Naive thymus-derived CD4-positive, alpha-beta T cell (primary cell): ENCODE measurements at regions of chr2 and their contacts with region 1.

Region 1: GRCh38 chr2:42360890-42361727 is at the start of gene COX7A2L:
- DNase-seq: peak; percentile 88 to 97 (median 96)
- ATAC-seq: peak; percentile 98
- H3K4me3 ChIP-seq: peak within 1 kb of the TSS; percentile 82
- H3K4me3 Mint-ChIP-seq: peak within 1 kb of the TSS; percentile 87 to 98 (median 95)
- H3K27ac ChIP-seq: peak within 1 kb of the TSS; percentile 92
- H3K27ac Mint-ChIP-seq: peak within 1 kb of the TSS; percentile 90 to 100 (median 98)
- H3K4me1 ChIP-seq: peaks cover 23 to 24% of the 10 kb centered on the region in 2 donors
- H3K4me1 Mint-ChIP-seq: peaks cover 33 to 56% (median 51%) of the 10 kb centered on the region in 7 donors
- H3K27me3 ChIP-seq: no peaks in the 10 kb centered on the region
- H3K27me3 Mint-ChIP-seq: no peaks in the 10 kb centered on the region
- total RNA-seq, gene COX7A2L: 57.3 to 87.7 (median 81.5) TPM

Region 2: GRCh38 chr2:42095923-42096408 is 265.1 kb before region 1 on chr2:
- CTCF ChIA-PET with region 1: interaction called, 3 read pairs
- POLR2A ChIA-PET with region 1: interaction called, 3 read pairs
- intact Hi-C with region 1: loop called in 1 of 2 experiments (anchors 1 kb)
- DNase-seq: peak; percentile 46 to 78 (median 71)
- ATAC-seq: peak; percentile 71
- H3K4me3 ChIP-seq: no peak overlapping the region
- H3K4me3 Mint-ChIP-seq: no peak overlapping the region
- H3K27ac ChIP-seq: no peak overlapping the region
- H3K27ac Mint-ChIP-seq: peak overlapping the region in 7 of 9 donors; percentile 4 to 70 (median 25)
- H3K4me1 ChIP-seq: peaks cover 33 to 38% of the 10 kb centered on the region in 2 donors
- H3K4me1 Mint-ChIP-seq: peaks cover 37 to 50% (median 47%) of the 10 kb centered on the region in 7 donors
- H3K27me3 ChIP-seq: no peaks in the 10 kb centered on the region
- H3K27me3 Mint-ChIP-seq: peaks cover 0 to 35% (median 0%) of the 10 kb centered on the region in 5 donors

Region 3: DNA sequence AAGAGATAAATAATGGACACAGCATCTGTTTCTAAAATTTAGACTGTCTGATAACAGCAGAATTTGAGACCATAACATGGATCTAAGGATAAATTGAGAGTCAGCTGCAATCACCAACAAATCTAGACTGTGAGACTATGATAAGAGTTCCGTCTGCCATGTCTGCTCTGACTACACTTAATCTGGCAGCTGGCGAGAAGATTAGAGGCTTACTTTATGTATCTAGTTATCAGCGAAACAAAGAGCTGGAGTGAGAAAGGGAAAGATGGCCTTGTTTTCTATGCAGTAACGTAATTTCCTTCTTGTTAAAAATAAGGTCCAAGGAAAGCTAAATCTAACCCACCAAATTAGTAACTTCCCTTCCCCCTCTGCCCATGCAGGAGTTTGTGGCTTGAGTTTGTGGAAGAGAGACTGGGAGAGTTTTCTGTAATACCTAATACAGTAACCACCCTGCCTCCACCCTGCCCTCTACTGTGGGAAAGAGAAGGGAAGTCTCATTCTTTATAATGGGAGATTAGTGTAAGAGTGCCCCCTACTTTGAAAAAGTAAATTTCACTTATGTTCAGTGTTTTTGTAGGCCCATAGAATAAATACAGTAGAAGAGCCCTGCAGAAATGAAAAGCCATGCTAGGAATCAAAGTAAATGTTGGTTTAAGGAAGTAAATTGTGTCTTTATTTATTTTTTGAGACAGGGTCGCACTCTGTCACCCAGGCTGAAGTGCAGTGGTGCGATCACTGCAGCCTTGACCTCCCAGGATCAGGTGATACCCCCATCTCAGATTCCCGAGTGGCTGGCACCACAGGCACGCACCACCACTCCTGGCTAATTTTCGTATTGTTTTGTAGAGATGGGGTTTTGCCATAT is 164.5 kb before region 1 on chr2:
- CTCF ChIA-PET with region 1: no interaction called
- POLR2A ChIA-PET with region 1: no interaction called
- intact Hi-C with region 1: loop called in 1 of 2 experiments (anchors 1 kb)
- DNase-seq: peak in 7 of 9 donors; percentile 56 to 75 (median 68)
- ATAC-seq: peak; percentile 91
- H3K4me3 ChIP-seq: no peak overlapping the region
- H3K4me3 Mint-ChIP-seq: peak overlapping the region in 9 of 10 donors; percentile 1 to 66 (median 41)
- H3K27ac ChIP-seq: peak overlapping the region; percentile 22
- H3K27ac Mint-ChIP-seq: peak overlapping the region in 8 of 9 donors; percentile 17 to 91 (median 74)
- H3K4me1 ChIP-seq: peaks cover 42 to 48% of the 10 kb centered on the region in 2 donors
- H3K4me1 Mint-ChIP-seq: peaks cover 54 to 93% (median 84%) of the 10 kb centered on the region in 7 donors
- H3K27me3 ChIP-seq: no peaks in the 10 kb centered on the region
- H3K27me3 Mint-ChIP-seq: no peaks in the 10 kb centered on the region

Region 4: GRCh38 chr2:42328148-42328833 is 32.8 kb before region 1 on chr2:
- CTCF ChIA-PET with region 1: no interaction called
- POLR2A ChIA-PET with region 1: interaction called, 3 read pairs
- intact Hi-C with region 1: loop called in 1 of 2 experiments (anchors 2 kb)
- DNase-seq: peak in 5 of 9 donors; percentile 13 to 34 (median 32)
- ATAC-seq: peak; percentile 57
- H3K4me3 ChIP-seq: no peak overlapping the region
- H3K4me3 Mint-ChIP-seq: no peak overlapping the region
- H3K27ac ChIP-seq: no peak overlapping the region
- H3K27ac Mint-ChIP-seq: peak overlapping the region in 7 of 9 donors; percentile 12 to 77 (median 57)
- H3K4me1 ChIP-seq: no peaks in the 10 kb centered on the region
- H3K4me1 Mint-ChIP-seq: peaks cover 0 to 5% (median 0%) of the 10 kb centered on the region in 7 donors
- H3K27me3 ChIP-seq: no peaks in the 10 kb centered on the region
- H3K27me3 Mint-ChIP-seq: no peaks in the 10 kb centered on the region

Region 5: DNA sequence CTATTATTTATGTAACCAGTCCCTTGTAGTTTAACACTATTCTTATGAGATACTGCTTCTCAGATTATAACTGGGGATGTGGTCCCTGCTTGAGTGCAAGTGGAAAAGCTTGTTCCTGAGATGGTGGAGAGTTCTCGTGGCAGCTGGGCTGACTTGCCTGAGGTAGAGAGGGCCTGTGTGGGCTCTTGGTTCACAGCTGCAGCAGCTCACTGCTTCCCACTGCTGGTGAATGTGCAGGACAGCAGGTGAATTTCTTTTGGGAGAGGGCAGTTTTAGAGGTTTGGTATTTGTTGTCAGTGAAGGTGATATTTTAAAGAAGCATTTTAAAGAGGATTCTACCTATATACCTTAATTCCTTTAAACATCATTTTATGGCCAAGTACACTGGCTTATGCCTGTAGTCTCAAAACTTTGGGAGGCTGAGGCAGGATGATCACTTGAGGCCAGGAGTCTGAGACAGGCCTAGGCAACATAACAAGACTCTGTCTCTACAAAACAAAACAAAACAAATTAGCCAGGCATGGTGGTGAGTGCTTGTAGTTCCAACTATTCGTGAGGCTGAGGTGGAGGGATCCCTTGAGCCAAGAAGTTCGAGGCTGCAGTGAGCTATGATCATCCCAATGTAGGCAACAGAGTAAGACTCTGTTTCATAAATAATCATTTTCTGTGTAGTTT is 302.1 kb after region 1 on chr2:
- CTCF ChIA-PET with region 1: no interaction called
- POLR2A ChIA-PET with region 1: no interaction called
- intact Hi-C with region 1: loop called in 1 of 2 experiments (anchors 1 kb)
- DNase-seq: peak; percentile 26 to 85 (median 75)
- ATAC-seq: peak; percentile 96
- H3K4me3 ChIP-seq: no peak overlapping the region
- H3K4me3 Mint-ChIP-seq: peak overlapping the region in 7 of 10 donors; percentile 31 to 69 (median 53)
- H3K27ac ChIP-seq: peak overlapping the region; percentile 43
- H3K27ac Mint-ChIP-seq: peak overlapping the region in 8 of 9 donors; percentile 29 to 95 (median 83)
- H3K4me1 ChIP-seq: peaks cover 0 to 5% of the 10 kb centered on the region in 2 donors
- H3K4me1 Mint-ChIP-seq: peaks cover 8 to 60% (median 25%) of the 10 kb centered on the region in 7 donors
- H3K27me3 ChIP-seq: no peaks in the 10 kb centered on the region
- H3K27me3 Mint-ChIP-seq: no peaks in the 10 kb centered on the region

Region 6: GRCh38 chr2:44167940-44168680 is 1807.0 kb after region 1 on chr2:
- CTCF ChIA-PET with region 1: no interaction called
- POLR2A ChIA-PET with region 1: no interaction called
- intact Hi-C with region 1: loop called in 1 of 2 experiments (anchors 1 kb)
- DNase-seq: peak; percentile 78 to 100 (median 99)
- ATAC-seq: peak; percentile 87
- H3K4me3 ChIP-seq: peak overlapping the region; percentile 80
- H3K4me3 Mint-ChIP-seq: peak overlapping the region; percentile 92 to 100 (median 96)
- H3K27ac ChIP-seq: peak overlapping the region; percentile 96
- H3K27ac Mint-ChIP-seq: peak overlapping the region; percentile 99 to 100 (median 100)
- H3K4me1 ChIP-seq: peaks cover 16 to 28% of the 10 kb centered on the region in 2 donors
- H3K4me1 Mint-ChIP-seq: peaks cover 29 to 38% (median 35%) of the 10 kb centered on the region in 7 donors
- H3K27me3 ChIP-seq: no peaks in the 10 kb centered on the region
- H3K27me3 Mint-ChIP-seq: no peaks in the 10 kb centered on the region